ENCODE measurements at regions of chr10 and their contacts with region 1.

Region 1: DNA sequence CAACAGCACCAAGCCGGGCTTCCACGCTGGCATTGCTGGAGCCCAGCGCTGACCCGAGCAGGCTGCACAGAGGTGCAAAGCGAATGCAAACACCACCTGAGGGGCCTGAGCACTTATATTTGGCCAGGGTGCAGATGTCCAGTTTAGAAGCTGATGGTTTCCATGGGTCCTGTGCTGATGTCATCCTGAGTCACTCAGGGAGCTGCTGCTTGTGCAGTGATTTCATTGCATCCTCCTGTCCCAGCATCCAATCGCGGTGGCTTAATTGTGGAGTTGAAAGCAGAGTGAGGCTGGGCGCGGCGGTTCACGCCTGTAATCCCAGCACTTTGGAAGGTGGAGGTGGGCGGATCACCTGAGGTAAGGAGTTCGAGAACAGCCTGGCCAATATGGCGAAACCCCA is 410.2 kb upstream of the KLF6 start:
- DNase-seq: peak; percentile 78
- ATAC-seq: peak; percentile 48
- H3K4me3 ChIP-seq: no peak overlapping the region
- H3K27ac ChIP-seq: peak overlapping the region; percentile 100
- H3K4me1 ChIP-seq: peaks cover 37% of the 10 kb centered on the region
- H3K27me3 ChIP-seq: no peaks in the 10 kb centered on the region
- CTCF ChIP-seq: no peak

Region 2: DNA sequence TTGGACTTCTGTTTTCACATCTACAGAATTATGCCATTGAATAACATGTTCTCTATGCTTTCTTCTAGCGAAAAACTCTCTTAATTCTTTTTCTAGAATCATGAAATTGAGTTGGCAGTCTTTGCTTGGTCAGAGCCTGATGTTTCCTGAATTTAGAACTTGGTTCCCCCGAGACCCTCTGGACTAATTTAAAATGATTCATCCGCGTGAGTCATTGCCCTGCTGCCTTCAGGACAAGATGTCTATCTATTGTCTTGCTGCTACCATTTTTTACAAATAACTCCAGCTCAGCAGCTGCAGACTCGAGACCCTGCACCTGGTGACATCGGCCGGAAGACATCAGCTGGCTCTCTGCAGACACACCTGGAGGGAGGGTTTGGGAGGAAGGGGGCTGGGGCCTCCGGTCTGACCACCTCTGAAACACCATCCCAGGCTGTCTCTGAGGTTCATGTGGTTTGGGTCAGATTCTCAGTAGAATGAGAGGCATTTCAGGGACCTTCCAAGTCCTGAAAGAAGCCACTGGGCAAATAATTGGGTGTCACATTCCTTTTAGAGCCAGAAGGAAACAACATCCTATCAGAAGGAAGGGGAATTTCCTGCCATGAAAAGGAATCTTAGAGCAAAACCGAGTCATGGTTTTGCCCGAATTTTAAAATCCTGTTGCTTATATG is 389.3 kb before region 1 on chr10:
- CTCF ChIA-PET with region 1: no interaction called
- POLR2A ChIA-PET with region 1: no interaction called
- intact Hi-C with region 1: loop called (anchors 10 kb)
- DNase-seq: peak; percentile 77
- ATAC-seq: peak; percentile 29
- H3K4me3 ChIP-seq: peak overlapping the region; percentile 54; the same call in 1 of the 2 replicates
- H3K27ac ChIP-seq: peak overlapping the region; percentile 100
- H3K4me1 ChIP-seq: peaks cover 72% of the 10 kb centered on the region
- H3K27me3 ChIP-seq: no peaks in the 10 kb centered on the region
- CTCF ChIP-seq: no peak

Region 3: DNA sequence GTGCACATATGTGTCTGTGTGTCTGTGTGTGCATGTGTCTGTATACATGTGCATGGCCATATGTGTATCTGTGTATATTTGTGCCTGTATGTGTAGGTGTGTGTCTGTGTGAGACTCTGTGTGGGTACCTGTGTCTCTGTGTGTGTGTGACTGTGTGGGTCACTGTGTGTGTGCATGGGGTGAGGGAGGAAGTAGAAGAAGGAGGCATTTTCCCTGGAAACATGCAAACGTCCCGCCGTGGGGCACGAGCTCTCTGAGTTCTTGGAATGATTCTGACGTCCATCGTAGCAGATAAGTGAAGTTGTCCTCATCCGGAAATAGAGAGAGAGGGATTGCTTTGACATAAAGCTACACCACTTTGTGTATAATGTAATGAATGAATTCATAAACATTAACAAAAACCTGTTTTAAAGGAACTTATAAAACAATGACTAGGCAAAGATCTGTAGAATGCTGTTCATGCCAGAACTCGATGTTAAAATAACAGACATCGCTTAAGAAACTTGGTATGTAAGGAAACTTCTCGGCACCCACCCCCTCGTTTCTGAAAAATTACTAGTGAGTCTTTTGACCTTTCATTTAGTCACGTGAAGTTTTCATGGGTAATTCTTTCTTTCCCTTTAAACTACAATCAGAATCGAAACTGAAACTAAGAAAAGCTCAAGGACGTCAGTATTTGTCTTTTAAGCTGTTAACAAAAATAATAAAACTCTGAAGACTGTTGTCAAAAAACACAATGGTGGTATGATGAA is 366.6 kb before region 1 on chr10:
- CTCF ChIA-PET with region 1: no interaction called
- POLR2A ChIA-PET with region 1: interaction called, 11 read pairs
- intact Hi-C with region 1: no loop called
- DNase-seq: peak; percentile 31
- ATAC-seq: peak; percentile 20; the same call in 1 of the 2 replicates
- H3K4me3 ChIP-seq: peak overlapping the region; percentile 71
- H3K27ac ChIP-seq: peak overlapping the region; percentile 37
- H3K4me1 ChIP-seq: peaks cover 13% of the 10 kb centered on the region; the same call in 1 of the 2 replicates
- H3K27me3 ChIP-seq: no peaks in the 10 kb centered on the region
- CTCF ChIP-seq: no peak

Region 4: DNA sequence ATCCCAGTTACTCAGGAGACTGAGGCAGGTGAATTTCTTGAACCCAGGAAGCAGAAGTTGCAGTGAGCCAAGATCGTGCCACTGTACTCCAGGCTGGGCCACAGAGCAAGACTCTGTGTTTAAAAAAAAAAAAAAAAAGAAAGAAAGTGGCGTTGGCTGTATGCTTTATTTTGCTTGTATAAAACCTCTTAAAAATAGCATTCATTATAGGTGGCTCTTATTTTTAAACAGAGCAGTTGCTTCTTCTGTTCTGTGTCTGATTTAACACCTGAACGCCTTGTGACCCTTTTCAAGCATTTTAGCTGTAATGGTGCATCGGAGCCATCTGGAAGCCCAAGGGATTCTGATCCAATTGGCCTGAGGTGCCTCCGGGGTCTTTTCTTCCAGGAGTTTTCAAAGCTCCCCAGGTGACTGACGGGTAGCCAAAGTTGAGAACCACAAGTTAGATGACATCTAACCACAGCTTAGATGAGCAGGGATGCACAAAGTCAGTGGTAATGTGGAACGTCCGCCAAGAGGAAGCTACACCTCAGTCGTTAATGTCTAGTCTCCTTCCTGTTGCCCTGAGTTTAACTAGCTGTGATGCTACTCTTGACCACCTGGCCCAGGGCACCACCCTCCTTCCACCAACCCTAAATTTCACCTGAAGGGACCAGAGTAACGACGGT is 135.6 kb before region 1 on chr10:
- CTCF ChIA-PET with region 1: no interaction called
- POLR2A ChIA-PET with region 1: no interaction called
- intact Hi-C with region 1: loop called (anchors 1 kb)
- DNase-seq: no peak
- ATAC-seq: no peak
- H3K4me3 ChIP-seq: no peak overlapping the region
- H3K27ac ChIP-seq: no peak overlapping the region
- H3K4me1 ChIP-seq: peaks cover 17% of the 10 kb centered on the region
- H3K27me3 ChIP-seq: no peaks in the 10 kb centered on the region
- CTCF ChIP-seq: no peak

Region 5: DNA sequence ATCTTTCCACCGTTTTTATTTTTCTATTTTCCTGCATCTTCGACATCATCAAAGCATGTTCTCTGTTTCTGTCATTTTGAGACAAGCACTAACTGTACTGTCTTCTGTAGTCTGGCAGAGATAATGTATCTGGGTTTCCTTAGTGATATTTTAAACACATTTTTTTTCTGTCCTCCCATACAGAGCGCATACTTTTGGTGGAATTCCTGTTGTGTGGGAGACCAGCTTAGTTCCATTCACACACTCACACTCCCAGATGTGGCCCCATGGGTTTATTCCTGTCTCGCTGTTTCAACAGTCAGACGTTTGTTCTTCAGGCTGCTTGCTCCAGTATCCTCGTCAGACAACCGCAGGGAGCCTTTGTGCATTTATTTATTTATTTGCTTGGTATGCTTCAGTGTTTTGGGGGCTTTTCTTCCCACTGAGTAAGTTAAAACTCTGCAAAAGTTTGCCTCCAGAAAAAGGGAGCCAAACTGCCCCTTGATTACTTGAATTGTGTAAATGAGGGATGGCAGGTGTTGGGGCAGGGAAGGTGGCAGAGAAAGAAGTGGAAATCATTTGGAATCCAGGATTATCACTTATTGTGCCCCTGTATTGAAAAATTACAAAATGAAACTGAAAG is 46.6 kb after region 1 on chr10:
- CTCF ChIA-PET with region 1: no interaction called
- POLR2A ChIA-PET with region 1: no interaction called
- intact Hi-C with region 1: loop called (anchors 10 kb)
- DNase-seq: no peak
- ATAC-seq: no peak
- H3K4me3 ChIP-seq: peak overlapping the region; percentile 60; the same call in 1 of the 2 replicates
- H3K27ac ChIP-seq: peak overlapping the region; percentile 99
- H3K4me1 ChIP-seq: peaks cover 39% of the 10 kb centered on the region
- H3K27me3 ChIP-seq: no peaks in the 10 kb centered on the region
- CTCF ChIP-seq: no peak

Region 6: GRCh38 chr10:4353964-4354363 is 158.8 kb after region 1 on chr10:
- CTCF ChIA-PET with region 1: no interaction called
- POLR2A ChIA-PET with region 1: interaction called, 3 read pairs
- intact Hi-C with region 1: loop called (anchors 2 kb)
- DNase-seq: peak; percentile 81
- ATAC-seq: peak; percentile 75
- H3K4me3 ChIP-seq: no peak overlapping the region; the same call in 1 of the 2 replicates
- H3K27ac ChIP-seq: peak overlapping the region; percentile 92
- H3K4me1 ChIP-seq: peaks cover 33% of the 10 kb centered on the region
- H3K27me3 ChIP-seq: no peaks in the 10 kb centered on the region
- CTCF ChIP-seq: no peak

Region 7: DNA sequence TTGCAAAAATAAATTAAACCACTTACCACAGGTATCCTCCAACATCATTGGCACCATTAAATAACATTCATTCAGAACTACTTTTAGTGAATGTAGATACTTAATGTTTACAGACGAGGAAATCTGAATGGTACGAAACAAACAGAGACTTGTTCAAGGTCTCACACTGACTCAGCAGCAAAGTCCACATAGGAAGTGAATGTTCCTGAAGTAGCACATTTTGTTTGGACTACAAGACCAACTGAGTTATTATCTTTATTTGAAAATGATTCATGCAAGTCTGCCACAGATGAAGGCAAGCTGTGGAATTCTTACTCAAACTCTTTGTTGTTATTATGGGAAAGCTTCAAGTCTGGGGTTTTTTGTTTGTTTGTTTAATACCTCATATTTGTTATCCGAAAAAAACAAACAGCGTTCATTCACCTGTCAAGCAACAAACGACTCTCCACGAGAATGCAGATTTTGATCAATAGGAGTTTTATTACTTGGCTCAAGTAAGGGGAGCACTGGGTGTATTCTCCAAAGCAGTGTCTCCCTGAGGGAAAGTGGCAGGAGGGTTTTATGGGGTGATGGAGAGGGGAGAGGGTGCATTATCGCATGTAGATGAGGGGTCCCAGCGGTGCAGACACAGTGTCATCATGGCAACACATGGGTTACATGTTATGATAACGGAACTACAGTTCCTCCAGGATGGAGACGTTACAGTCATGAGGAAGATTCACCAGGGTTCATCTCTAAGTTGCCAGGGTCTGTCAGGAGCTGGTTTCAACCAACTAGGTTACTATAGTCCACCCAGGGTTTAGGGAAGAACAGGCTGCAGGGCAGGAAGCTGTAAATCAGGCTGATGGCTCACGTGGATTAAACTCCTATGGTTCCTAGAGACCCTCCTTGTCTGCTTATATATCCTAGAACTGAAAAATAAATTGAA is 483.1 kb after region 1 on chr10:
- CTCF ChIA-PET with region 1: no interaction called
- POLR2A ChIA-PET with region 1: no interaction called
- intact Hi-C with region 1: loop called (anchors 10 kb)
- DNase-seq: peak; percentile 80
- ATAC-seq: peak; percentile 87
- H3K4me3 ChIP-seq: peak overlapping the region; percentile 74
- H3K27ac ChIP-seq: peak overlapping the region; percentile 99
- H3K4me1 ChIP-seq: peaks cover 46% of the 10 kb centered on the region
- H3K27me3 ChIP-seq: no peaks in the 10 kb centered on the region
- CTCF ChIP-seq: no peak